Common myeloid progenitor, CD34-positive (primary cell): ENCODE measurements at regions of chr10 and their contacts with region 1.

Region 1: GRCh38 chr10:17872191-17873091 is 63.3 kb downstream of the MRC1 start:
- DNase-seq: peak; percentile 40 to 75 (median 64)
- H3K4me3 ChIP-seq: no peak overlapping the region
- H3K27ac ChIP-seq: no peak overlapping the region
- H3K4me1 ChIP-seq: peaks cover 0 to 1% (median 0%) of the 10 kb centered on the region in 4 experiments
- H3K27me3 ChIP-seq: no peaks in the 10 kb centered on the region

Region 2: GRCh38 chr10:17599089-17599488 is 273.4 kb before region 1 on chr10:
- CTCF ChIA-PET with region 1: interaction called, 11 read pairs
- POLR2A ChIA-PET with region 1: no interaction called
- DNase-seq: peak; percentile 68 to 81 (median 78)
- H3K4me3 ChIP-seq: peak overlapping the region in 1 of 7 experiments; percentile 39
- H3K27ac ChIP-seq: no peak overlapping the region
- H3K4me1 ChIP-seq: peaks cover 0 to 10% (median 0%) of the 10 kb centered on the region in 4 experiments
- H3K27me3 ChIP-seq: no peaks in the 10 kb centered on the region

Region 3: GRCh38 chr10:17607603-17608332 is 264.7 kb before region 1 on chr10:
- CTCF ChIA-PET with region 1: interaction called, 16 read pairs
- POLR2A ChIA-PET with region 1: no interaction called
- DNase-seq: peak; percentile 63 to 77 (median 76)
- H3K4me3 ChIP-seq: no peak overlapping the region
- H3K27ac ChIP-seq: no peak overlapping the region
- H3K4me1 ChIP-seq: peaks cover 0 to 6% (median 3%) of the 10 kb centered on the region in 4 experiments
- H3K27me3 ChIP-seq: no peaks in the 10 kb centered on the region

Region 4: GRCh38 chr10:17847585-17848296 is 24.7 kb before region 1 on chr10:
- CTCF ChIA-PET with region 1: interaction called, 75 read pairs
- POLR2A ChIA-PET with region 1: no interaction called
- DNase-seq: peak; percentile 25 to 62 (median 38)
- H3K4me3 ChIP-seq: no peak overlapping the region
- H3K27ac ChIP-seq: no peak overlapping the region
- H3K4me1 ChIP-seq: peaks cover 8 to 18% (median 14%) of the 10 kb centered on the region in 4 experiments
- H3K27me3 ChIP-seq: no peaks in the 10 kb centered on the region

Region 5: DNA sequence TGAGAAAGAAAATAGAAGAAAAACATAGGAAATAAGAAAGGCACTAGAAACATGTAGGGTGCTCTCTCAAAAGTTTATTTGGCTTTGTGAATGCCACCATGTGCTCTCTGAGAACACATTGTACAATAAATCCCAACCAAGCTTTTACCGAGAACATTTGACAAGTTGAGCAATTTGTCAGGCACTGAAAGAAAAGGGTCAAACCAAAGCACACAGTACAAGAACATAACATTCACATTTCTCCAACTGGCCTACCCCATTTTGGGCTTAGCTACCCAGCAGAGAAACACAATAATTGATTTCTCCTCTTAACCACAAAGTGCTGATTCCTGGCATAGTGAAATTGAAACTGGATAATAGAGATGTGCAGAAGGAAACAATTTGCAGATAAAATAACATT is 10.1 kb after region 1 on chr10:
- CTCF ChIA-PET with region 1: interaction called, 13 read pairs
- POLR2A ChIA-PET with region 1: no interaction called
- DNase-seq: no peak
- H3K4me3 ChIP-seq: no peak overlapping the region
- H3K27ac ChIP-seq: no peak overlapping the region
- H3K4me1 ChIP-seq: no peaks in the 10 kb centered on the region
- H3K27me3 ChIP-seq: no peaks in the 10 kb centered on the region